Calu3 (cell line): ENCODE measurements at regions of chr3 and their contacts with region 1.

Region 1: GRCh38 chr3:58630076-58630709 is 36.4 kb downstream of the FAM3D start:
- DNase-seq: peak; percentile 76
- H3K4me3 Mint-ChIP-seq: no peak overlapping the region
- H3K27ac Mint-ChIP-seq: no peak overlapping the region
- H3K4me1 Mint-ChIP-seq: peaks cover 6% of the 10 kb centered on the region
- H3K27me3 Mint-ChIP-seq: peaks cover 9% of the 10 kb centered on the region
- CTCF ChIP-seq: peak; percentile 87

Region 2: DNA sequence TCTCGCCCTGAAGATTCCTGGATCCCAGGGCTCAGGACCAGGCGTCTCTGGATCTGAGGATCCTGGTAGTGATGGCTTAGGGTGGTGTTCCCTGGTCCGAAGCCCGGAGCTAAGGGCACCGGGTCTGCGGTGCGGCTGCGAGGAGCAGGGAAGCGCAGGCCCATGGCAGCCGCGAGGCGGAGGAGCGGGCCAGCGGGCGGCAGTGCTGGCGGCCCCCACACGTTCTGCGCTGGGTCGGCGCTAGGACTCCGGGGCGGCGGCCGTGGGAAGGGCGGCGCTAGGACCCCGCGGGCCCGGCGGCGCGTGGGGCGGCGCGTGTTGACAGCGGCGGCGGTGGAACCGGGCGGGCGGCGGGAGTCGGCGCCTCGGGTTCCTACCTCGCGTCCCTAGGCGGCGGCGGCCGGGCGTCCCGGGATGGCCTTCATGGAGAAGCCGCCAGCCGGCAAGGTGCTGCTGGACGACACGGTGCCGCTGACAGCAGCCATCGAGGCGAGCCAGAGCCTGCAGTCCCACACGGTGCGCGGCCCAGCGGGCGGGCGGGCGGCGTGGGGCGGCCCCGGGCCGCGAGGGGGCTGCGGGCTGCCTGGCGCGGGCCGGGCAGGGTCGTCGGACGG is 297.5 kb before region 1 on chr3 and contains the start of gene PXK:
- CTCF ChIA-PET with region 1: no interaction called
- intact Hi-C with region 1: loop called (anchors 5 kb)
- DNase-seq: peak; percentile 81
- H3K4me3 Mint-ChIP-seq: peak within 1 kb of the TSS; percentile 92
- H3K27ac Mint-ChIP-seq: no peak within 1 kb of the TSS
- H3K4me1 Mint-ChIP-seq: peaks cover 9% of the 10 kb centered on the region
- H3K27me3 Mint-ChIP-seq: no peaks in the 10 kb centered on the region
- CTCF ChIP-seq: no peak
- total RNA-seq, gene PXK: 8.6 and 10.8 TPM in 2 replicates

Region 3: GRCh38 chr3:58560771-58561311 is 69.4 kb before region 1 on chr3:
- CTCF ChIA-PET with region 1: interaction called, 66 read pairs
- intact Hi-C with region 1: loop called (anchors 2 kb)
- DNase-seq: peak; percentile 65
- H3K4me3 Mint-ChIP-seq: no peak overlapping the region
- H3K27ac Mint-ChIP-seq: no peak overlapping the region
- H3K4me1 Mint-ChIP-seq: peaks cover 34% of the 10 kb centered on the region
- H3K27me3 Mint-ChIP-seq: peaks cover 3% of the 10 kb centered on the region
- CTCF ChIP-seq: peak; percentile 34

Region 4: GRCh38 chr3:58568572-58569286 is 61.5 kb before region 1 on chr3:
- CTCF ChIA-PET with region 1: interaction called, 66 read pairs
- intact Hi-C with region 1: loop called (anchors 1 kb)
- DNase-seq: peak; percentile 80
- H3K4me3 Mint-ChIP-seq: peak overlapping the region; percentile 29
- H3K27ac Mint-ChIP-seq: no peak overlapping the region
- H3K4me1 Mint-ChIP-seq: peaks cover 30% of the 10 kb centered on the region
- H3K27me3 Mint-ChIP-seq: peaks cover under 1% of the 10 kb centered on the region
- CTCF ChIP-seq: peak; percentile 81

Region 5: DNA sequence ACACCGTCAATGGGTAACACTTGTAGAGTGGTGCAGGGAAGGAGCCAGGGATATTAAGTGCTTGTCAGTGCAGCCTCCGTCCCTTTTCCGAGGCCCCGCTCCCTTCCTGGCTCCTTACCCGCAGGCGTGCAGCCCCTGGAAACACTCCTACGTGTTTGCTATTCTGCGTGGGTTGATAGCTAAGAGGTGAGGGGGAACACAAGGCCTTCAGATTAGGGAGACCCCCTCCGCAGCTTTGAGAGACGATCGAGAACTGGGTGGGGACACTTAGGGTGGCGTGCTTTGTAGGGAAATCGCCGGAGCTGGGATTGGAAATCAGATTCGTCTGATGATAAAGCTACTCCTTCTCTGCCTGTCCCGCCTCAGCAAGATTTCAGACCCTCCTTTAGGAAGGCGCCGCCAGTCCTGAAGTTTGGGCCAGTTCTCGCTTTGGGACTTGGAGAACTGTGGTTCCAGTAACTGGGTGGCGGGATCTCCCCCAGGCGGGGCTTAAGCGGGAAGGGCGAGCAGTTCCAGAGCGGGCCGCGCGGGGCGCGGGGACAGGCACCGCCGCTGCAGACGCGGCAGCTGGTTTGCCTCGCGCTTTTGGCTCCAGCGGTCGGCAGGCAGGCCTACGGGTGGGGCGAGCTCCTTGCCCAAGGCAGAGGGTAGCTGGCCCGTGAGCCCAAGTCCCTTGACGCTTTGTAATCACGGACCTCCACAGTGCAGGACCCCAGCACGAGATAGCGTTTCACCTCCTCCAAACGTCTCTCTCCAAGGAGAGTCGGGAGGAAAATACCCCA is 45.0 kb before region 1 on chr3:
- CTCF ChIA-PET with region 1: interaction called, 3 read pairs
- intact Hi-C with region 1: loop called (anchors 5 kb)
- DNase-seq: peak; percentile 84
- H3K4me3 Mint-ChIP-seq: peak overlapping the region; percentile 93
- H3K27ac Mint-ChIP-seq: peak overlapping the region; percentile 39
- H3K4me1 Mint-ChIP-seq: peaks cover 11% of the 10 kb centered on the region
- H3K27me3 Mint-ChIP-seq: peaks cover 16% of the 10 kb centered on the region
- CTCF ChIP-seq: peak; percentile 77

Region 6: DNA sequence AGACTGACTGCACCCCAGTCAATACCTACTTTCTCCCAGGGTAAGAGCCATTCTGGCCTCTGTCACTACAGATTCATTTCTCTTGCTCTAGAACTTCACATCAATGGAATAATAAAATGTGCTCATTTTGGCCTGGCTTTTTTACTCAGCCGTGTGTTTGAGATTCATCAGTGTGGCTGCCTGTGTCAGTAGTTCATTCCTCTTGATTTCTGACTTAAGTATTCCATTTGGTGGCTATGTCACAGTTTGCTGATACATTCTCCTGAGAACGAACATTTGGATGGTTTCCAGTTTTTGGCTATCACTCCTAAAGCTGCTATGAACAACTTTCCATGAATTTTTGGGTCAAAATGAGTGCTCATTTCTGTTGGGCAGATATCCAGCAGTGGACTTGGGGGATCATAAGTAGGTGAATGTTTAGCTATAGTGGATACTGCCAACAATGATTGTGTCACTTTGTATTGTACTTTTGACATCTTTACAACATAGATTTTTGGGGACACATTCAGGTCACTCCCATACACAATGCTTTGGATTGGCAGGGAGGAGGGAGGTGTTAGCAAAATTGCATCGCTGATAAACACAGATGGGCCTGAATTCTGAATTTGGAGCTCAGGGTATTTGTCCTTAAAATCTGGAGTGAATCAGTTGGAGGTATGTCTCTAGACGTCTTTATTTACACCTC is 33.2 kb before region 1 on chr3:
- CTCF ChIA-PET with region 1: no interaction called
- intact Hi-C with region 1: no loop called
- DNase-seq: no peak
- H3K4me3 Mint-ChIP-seq: no peak overlapping the region
- H3K27ac Mint-ChIP-seq: no peak overlapping the region
- H3K4me1 Mint-ChIP-seq: peaks cover 7% of the 10 kb centered on the region
- H3K27me3 Mint-ChIP-seq: peaks cover 10% of the 10 kb centered on the region
- CTCF ChIP-seq: no peak

Region 7: DNA sequence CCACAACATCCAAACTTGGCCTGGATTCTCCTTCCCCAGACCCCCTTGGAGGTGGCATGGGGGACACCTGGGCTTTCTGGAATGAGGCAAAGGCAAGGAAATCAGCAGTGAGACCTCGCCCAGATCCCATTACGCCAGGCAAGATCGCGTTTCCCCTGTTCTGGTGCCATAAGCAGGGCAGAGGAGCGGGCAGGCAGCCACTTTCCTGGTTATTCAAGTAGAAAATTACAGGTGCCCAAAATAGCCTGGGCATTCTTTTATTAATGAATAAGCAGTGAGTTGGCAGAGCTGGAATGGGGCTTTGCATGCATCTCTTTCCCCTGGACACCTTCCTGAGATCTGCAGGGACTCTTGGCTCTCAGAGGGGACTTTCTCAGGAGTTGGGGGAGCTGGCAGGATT is 21.5 kb before region 1 on chr3:
- CTCF ChIA-PET with region 1: no interaction called
- intact Hi-C with region 1: loop called (anchors 1 kb)
- DNase-seq: peak; percentile 38
- H3K4me3 Mint-ChIP-seq: no peak overlapping the region
- H3K27ac Mint-ChIP-seq: no peak overlapping the region
- H3K4me1 Mint-ChIP-seq: no peaks in the 10 kb centered on the region
- H3K27me3 Mint-ChIP-seq: peaks cover 23% of the 10 kb centered on the region
- CTCF ChIP-seq: no peak